ENCODE measurements at regions of chr9 and their contacts with region 1.

Region 1: GRCh38 chr9:109320742-109321448 is at the start of gene EPB41L4B:
- DNase-seq: peak; percentile 79
- H3K4me3 ChIP-seq: peak within 1 kb of the TSS in 1 of 3 experiments; percentile 19
- H3K27ac ChIP-seq: no peak within 1 kb of the TSS
- H3K4me1 ChIP-seq: peaks cover 2% of the 10 kb centered on the region
- H3K27me3 ChIP-seq: peaks cover 28 to 32% of the 10 kb centered on the region in 2 experiments
- CTCF ChIP-seq: peak; percentile 86 to 93
- POLR2A ChIP-seq: no peak
- total RNA-seq, gene EPB41L4B: 0.15 and 0.23 TPM in 2 replicates

Region 2: DNA sequence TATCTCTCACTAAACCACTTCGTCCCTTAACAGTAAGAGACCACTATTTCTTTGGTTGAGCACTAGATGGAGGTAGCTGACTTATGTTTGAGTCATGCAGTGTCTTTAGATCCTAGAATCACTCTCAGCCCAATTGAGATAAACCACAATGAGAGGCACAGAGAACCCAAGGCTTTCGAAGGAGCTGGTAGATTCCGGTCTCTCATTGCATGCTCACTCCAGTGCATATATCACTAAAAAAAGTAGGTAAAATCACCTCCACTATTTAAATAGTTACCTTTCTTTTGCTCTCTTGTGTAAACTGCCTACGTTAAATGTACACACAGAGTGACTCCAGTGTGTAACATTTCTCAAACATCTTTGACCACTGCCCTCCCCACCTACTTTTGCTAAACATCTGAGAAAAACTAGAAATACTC is 431.2 kb before region 1 on chr9:
- CTCF ChIA-PET with region 1: interaction called, 6 read pairs
- POLR2A ChIA-PET with region 1: no interaction called
- dilution Hi-C with region 1: no loop called
- intact Hi-C with region 1: loop called (anchors 2 kb)
- DNase-seq: peak; percentile 32
- H3K4me3 ChIP-seq: no peak overlapping the region
- H3K27ac ChIP-seq: no peak overlapping the region
- H3K4me1 ChIP-seq: peaks cover 3% of the 10 kb centered on the region
- H3K27me3 ChIP-seq: no peaks in the 10 kb centered on the region
- CTCF ChIP-seq: peak in 1 of 2 donors; percentile 21
- POLR2A ChIP-seq: no peak

Region 3: GRCh38 chr9:108953983-108954574 is 366.8 kb before region 1 on chr9:
- CTCF ChIA-PET with region 1: interaction called, 4 read pairs
- POLR2A ChIA-PET with region 1: no interaction called
- dilution Hi-C with region 1: no loop called
- intact Hi-C with region 1: loop called (anchors 2 kb)
- DNase-seq: peak; percentile 78
- H3K4me3 ChIP-seq: no peak overlapping the region
- H3K27ac ChIP-seq: no peak overlapping the region
- H3K4me1 ChIP-seq: peaks cover 20% of the 10 kb centered on the region
- H3K27me3 ChIP-seq: no peaks in the 10 kb centered on the region
- CTCF ChIP-seq: peak in 1 of 2 donors; percentile 34
- POLR2A ChIP-seq: no peak

Region 4: DNA sequence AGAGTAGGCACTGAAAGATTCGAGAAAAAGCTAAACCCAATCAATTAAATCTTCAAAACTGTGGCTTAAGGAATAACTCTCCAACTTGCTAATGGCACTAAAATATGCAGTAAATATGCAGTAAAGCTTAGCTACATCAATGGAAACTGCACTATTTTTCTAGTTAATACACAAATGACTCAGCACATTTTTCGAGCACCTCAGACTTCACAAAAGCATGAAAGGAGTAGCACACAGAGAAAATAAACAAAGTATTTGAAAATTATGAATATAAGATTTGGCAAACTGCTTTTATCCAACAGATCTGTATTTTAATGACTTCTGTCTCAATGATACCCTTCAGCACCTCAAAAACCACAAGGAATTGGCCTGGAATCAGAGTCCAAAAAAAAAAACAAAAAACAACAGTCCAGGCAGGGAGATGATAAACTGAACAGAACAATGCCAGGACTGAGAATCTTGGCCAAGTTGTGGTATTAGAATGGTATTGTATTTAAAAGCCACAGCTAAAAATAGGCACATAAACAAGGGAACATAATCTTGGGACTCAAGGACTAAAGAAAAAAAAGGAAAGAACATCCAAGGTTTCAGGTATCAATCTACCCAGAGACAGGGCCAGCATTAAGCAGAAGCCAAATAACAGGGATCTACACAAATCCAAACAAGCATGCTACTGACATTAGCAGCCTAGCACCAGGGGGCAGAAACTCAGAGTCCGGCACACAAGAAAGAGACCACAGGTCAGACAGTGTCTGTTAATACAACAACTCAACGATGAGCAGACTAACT is 222.5 kb before region 1 on chr9:
- CTCF ChIA-PET with region 1: no interaction called
- POLR2A ChIA-PET with region 1: no interaction called
- dilution Hi-C with region 1: no loop called
- intact Hi-C with region 1: loop called (anchors 1 kb)
- DNase-seq: peak; percentile 97
- H3K4me3 ChIP-seq: peak overlapping the region in 1 of 3 experiments; percentile 21
- H3K27ac ChIP-seq: peak overlapping the region; percentile 52
- H3K4me1 ChIP-seq: peaks cover 54% of the 10 kb centered on the region
- H3K27me3 ChIP-seq: no peaks in the 10 kb centered on the region
- CTCF ChIP-seq: peak; percentile 19 to 33
- POLR2A ChIP-seq: no peak

Region 5: GRCh38 chr9:109182940-109183798 is 137.7 kb before region 1 on chr9:
- CTCF ChIA-PET with region 1: interaction called, 8 read pairs
- POLR2A ChIA-PET with region 1: interaction called, 6 read pairs
- dilution Hi-C with region 1: no loop called
- intact Hi-C with region 1: loop called (anchors 1 kb)
- DNase-seq: peak; percentile 29
- H3K4me3 ChIP-seq: no peak overlapping the region
- H3K27ac ChIP-seq: no peak overlapping the region
- H3K4me1 ChIP-seq: no peaks in the 10 kb centered on the region
- H3K27me3 ChIP-seq: peaks cover 2 to 3% of the 10 kb centered on the region in 2 experiments
- CTCF ChIP-seq: peak; percentile 37 to 44
- POLR2A ChIP-seq: no peak

Region 6: GRCh38 chr9:109469646-109470358 is 148.9 kb after region 1 on chr9:
- CTCF ChIA-PET with region 1: no interaction called
- POLR2A ChIA-PET with region 1: no interaction called
- dilution Hi-C with region 1: no loop called
- intact Hi-C with region 1: no loop called
- DNase-seq: peak; percentile 77
- H3K4me3 ChIP-seq: no peak overlapping the region
- H3K27ac ChIP-seq: no peak overlapping the region
- H3K4me1 ChIP-seq: no peaks in the 10 kb centered on the region
- H3K27me3 ChIP-seq: peaks cover 36 to 37% of the 10 kb centered on the region in 2 experiments
- CTCF ChIP-seq: peak; percentile 85 to 87
- POLR2A ChIP-seq: no peak

Measured in endothelial cell of umbilical vein (primary cell).